Heart left ventricle (tissue), 16 donors: ENCODE measurements at regions of chr14 and their contacts with region 1.

Region 1: GRCh38 chr14:75132382-75133086 is 5.7 kb upstream of the NEK9 start:
- DNase-seq: peak in 2 of 5 donors; percentile 52 to 60
- ATAC-seq: peak in 3 of 4 donors; percentile 75 to 87 (median 81)
- H3K4me3 ChIP-seq: no peak overlapping the region
- H3K27ac ChIP-seq: peak overlapping the region in 3 of 12 donors; percentile 29 to 43 (median 33)
- H3K4me1 ChIP-seq: peaks cover 0 to 19% (median 11%) of the 10 kb centered on the region in 12 donors
- H3K27me3 ChIP-seq: no peaks in the 10 kb centered on the region
- CTCF ChIP-seq: peak; percentile 60 to 83 (median 71)
- POLR2A ChIP-seq: no peak

Region 2: GRCh38 chr14:75487155-75487671 is 354.7 kb after region 1 on chr14:
- intact Hi-C with region 1: loop called (anchors 2 to 10 kb)
- DNase-seq: no peak
- ATAC-seq: no peak
- H3K4me3 ChIP-seq: no peak overlapping the region
- H3K27ac ChIP-seq: no peak overlapping the region
- H3K4me1 ChIP-seq: peaks cover 0 to 4% (median 0%) of the 10 kb centered on the region in 12 donors
- H3K27me3 ChIP-seq: no peaks in the 10 kb centered on the region
- CTCF ChIP-seq: no peak
- POLR2A ChIP-seq: no peak

Region 3: DNA sequence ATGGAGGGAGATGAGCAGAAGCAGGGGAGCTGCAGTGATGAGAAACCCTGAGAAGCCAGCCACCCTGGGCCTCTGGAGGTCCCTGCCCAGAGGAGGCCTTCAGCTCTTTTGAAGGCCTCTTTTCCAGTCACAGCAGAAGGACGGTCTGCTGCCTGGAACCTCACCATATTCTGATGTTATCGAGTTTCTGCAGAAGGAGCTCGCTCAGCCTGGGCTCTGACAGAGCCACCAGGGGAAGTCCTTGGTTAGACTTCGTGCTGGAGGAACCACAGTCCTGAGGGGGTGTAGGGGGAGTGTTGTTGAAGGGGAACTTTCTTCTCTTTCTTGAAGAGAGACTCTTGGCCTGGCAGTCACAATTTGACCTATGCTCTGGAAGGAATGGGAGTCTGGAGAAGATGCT is 364.7 kb after region 1 on chr14:
- intact Hi-C with region 1: loop called in 1 of 10 experiments (anchors 5 kb)
- DNase-seq: no peak
- ATAC-seq: no peak
- H3K4me3 ChIP-seq: no peak overlapping the region
- H3K27ac ChIP-seq: no peak overlapping the region
- H3K4me1 ChIP-seq: peaks cover 0 to 12% (median 0%) of the 10 kb centered on the region in 12 donors
- H3K27me3 ChIP-seq: no peaks in the 10 kb centered on the region
- CTCF ChIP-seq: no peak
- POLR2A ChIP-seq: no peak

Region 4: DNA sequence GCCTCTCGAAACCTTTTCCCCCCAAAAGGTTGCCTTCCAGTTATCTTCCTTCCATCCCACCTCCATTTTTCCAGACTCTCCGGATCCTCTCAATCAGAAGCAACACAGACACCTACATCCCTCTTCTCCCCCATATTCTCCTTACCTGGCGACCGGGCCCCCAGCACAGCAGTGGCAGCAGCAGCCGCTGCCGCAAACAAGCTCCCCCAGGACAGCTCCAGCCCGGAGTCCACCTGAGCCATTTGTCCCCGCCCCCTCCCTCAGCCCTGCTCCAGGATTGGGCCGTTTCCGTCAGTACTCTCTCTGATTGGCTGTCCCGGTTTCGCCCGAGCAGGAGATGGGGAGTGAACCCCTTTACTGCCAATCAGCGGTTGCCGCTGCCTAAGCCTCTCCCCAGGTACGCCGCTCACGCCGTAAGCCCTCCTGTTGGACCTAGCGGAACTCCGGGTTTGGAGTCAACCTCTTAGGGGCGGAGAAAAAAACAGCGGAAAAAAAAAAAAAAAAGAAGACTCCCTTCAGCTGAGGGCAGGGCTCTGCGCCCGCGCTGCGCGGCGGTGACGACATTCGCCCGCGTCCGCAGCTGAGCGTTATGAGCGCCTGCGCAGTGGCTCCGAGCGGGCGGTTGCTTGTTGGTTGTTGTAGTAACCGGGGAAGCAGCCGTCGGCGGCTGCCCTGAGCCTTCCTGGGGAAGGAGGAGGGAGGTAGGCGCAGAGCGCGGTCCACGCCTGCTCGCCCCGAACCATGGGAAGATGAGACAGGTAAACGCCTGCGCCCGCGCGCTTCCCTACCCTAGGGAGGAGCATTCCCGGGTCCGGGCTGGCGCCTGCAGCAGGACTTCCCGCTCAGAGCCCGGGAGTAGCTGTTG is 528.3 kb after region 1 on chr14 and contains the starts of genes ERG28 and TTLL5:
- intact Hi-C with region 1: loop called in 1 of 10 experiments (anchors 10 kb)
- DNase-seq: peak; percentile 96 to 98 (median 97)
- ATAC-seq: peak; percentile 98 to 99 (median 98)
- H3K4me3 ChIP-seq: peak within 1 kb of the TSS; percentile 53 to 98 (median 84)
- H3K27ac ChIP-seq: peak within 1 kb of the TSS in 11 of 12 donors; percentile 75 to 89 (median 83)
- H3K4me1 ChIP-seq: peaks cover 0 to 31% (median 14%) of the 10 kb centered on the region in 12 donors
- H3K27me3 ChIP-seq: no peaks in the 10 kb centered on the region
- CTCF ChIP-seq: no peak
- POLR2A ChIP-seq: peak in 1 of 2 donors; percentile 58
- total RNA-seq, gene ERG28: 5.7 to 9.2 (median 7.4) TPM
- total RNA-seq, gene TTLL5: 13.8 to 24.6 (median 18.2) TPM